ENCODE measurements at regions of chr15 and their contacts with region 1.

Region 1: DNA sequence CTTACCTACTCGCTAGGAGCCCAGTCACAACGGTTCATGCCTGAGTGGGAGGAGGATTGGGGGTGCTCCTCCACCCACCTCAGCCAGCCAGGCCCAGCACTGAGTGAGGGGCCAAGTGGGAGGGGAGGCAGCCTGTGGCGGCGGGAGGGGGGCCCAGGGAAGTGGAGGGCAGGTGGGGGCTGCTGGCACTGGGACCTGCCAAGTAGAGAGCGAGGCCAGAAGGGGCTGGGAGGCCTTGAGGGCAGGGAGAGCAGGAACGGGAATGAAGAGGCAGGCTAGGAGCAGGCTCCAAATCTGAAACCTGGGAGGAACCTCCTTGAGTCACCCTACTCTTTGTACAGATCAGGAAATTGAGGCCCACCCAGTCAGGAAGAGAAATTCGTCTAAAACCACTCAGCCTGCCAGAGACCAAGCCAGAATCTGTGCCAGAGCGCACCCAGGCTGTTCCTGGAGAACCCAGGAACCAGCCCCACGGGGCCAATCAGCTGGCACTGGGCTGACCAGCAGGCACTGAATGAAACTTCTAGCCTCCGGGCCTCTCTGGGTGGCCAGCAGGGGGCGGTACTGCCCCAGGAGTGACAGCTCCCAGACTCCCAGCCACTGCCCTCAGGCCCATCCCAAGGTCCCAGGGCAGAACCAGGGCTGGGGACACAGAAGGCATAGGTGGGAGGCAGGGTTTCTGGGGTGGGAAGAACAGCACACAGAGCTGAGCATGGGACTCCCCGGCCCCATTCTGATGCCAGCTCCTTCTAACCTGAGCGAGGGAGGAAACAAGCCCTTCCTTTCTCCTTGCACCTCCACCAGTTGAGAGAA is 14.8 kb upstream of the CYP11A1 start:
- DNase-seq: peak; percentile 77
- H3K4me3 ChIP-seq: no peak overlapping the region
- H3K27ac ChIP-seq: no peak overlapping the region
- H3K4me1 ChIP-seq: peaks cover 52% of the 10 kb centered on the region
- CTCF ChIP-seq: peak; percentile 99

Region 2: DNA sequence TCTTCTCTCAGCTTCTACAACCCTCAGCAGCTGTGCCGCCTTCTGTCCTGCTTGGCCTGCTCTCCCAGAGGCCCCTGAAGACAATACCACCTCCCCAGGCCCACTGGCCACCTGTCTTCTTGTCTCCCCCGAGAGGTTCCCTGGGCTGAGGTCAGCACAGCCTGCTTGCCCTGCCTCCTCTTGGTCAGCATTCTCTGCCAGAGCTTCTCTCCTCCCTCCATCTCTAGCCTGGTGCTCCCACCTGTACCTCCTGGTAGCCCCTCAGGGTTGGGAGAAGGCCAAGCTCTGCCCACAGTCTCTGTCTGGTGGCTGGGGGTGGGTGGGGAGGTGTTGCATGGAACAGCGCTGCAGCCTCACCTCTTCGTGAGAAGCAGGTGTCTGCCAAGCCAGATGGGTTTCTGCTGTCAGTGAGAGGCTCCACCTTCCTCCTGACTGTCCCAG is 214.3 kb before region 1 on chr15:
- CTCF ChIA-PET with region 1: no interaction called
- POLR2A ChIA-PET with region 1: no interaction called
- intact Hi-C with region 1: no loop called
- DNase-seq: no peak
- H3K4me3 ChIP-seq: no peak overlapping the region
- H3K27ac ChIP-seq: no peak overlapping the region
- H3K4me1 ChIP-seq: no peaks in the 10 kb centered on the region
- CTCF ChIP-seq: no peak

Region 3: DNA sequence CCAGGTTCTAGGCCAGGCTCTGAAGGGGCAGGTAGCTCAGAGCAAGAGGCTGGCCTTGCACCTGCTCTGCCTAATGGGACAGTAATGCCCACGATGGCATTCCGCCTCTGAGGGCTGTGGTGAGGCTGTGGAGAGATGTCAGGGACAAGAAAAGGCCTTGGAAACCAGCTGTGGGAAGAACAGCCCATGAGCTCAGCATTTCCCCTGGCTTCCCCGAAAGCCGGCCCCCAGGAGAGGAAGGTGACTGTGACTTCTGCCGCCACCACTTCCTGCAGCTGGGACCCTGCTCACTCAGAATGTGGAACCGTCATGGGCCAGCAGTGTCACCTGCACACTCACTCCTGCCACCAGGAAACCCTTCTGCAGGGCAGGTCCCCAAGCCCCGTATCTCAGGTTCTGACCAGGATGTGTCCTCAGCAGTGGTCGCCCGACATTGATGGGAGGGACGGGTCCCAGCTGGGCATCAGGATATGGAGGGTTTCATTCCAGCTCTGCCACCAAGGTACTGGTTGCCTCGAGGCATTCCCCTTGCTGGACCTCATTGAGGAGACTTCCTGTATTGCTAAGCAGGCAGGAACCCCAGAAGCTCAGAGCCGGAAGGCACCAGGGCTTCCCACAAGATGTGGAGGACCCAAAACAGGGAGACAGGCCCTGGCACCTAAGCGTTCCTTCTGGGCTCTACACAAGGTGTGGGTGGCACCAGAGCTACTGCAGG is 20.8 kb after region 1 on chr15:
- CTCF ChIA-PET with region 1: interaction called, 6 read pairs
- POLR2A ChIA-PET with region 1: interaction called, 5 read pairs
- intact Hi-C with region 1: loop called (anchors 1 kb)
- DNase-seq: peak; percentile 89
- H3K4me3 ChIP-seq: peak overlapping the region; percentile 51
- H3K27ac ChIP-seq: peak overlapping the region; percentile 53
- H3K4me1 ChIP-seq: peaks cover 66% of the 10 kb centered on the region
- CTCF ChIP-seq: no peak

Region 4: DNA sequence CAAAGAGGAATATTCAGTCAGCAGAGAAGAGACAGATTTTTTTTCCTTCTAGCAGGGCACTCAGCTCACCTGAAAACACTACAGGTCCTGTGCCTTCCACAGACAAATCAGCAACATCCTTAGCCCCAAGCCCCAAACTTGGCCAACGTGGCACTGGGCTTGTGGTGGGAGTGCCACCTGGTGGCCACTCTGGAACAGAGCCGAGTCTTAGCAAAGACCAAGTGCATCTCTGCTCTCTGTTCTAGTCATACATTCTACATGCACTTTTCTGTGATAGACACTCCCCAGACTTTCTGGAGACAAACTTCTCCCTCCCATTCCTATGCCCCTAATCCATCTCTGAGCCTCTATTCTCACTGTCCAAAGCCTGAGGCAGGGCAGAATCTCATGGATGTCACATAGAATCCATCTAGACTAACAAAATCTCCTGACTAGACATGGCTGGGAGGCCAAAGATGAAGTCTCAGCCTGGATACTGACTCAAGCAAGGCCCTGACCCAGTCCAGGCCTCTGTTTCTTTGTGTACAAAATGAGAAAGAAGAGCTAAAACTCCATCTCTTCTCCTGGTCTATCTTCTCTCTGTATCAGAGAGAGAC is 56.6 kb after region 1 on chr15:
- CTCF ChIA-PET with region 1: interaction called, 3 read pairs
- POLR2A ChIA-PET with region 1: interaction called, 7 read pairs
- intact Hi-C with region 1: loop called (anchors 1 kb)
- DNase-seq: peak; percentile 84
- H3K4me3 ChIP-seq: no peak overlapping the region
- H3K27ac ChIP-seq: no peak overlapping the region
- H3K4me1 ChIP-seq: peaks cover 10% of the 10 kb centered on the region
- CTCF ChIP-seq: peak; percentile 98

Region 5: DNA sequence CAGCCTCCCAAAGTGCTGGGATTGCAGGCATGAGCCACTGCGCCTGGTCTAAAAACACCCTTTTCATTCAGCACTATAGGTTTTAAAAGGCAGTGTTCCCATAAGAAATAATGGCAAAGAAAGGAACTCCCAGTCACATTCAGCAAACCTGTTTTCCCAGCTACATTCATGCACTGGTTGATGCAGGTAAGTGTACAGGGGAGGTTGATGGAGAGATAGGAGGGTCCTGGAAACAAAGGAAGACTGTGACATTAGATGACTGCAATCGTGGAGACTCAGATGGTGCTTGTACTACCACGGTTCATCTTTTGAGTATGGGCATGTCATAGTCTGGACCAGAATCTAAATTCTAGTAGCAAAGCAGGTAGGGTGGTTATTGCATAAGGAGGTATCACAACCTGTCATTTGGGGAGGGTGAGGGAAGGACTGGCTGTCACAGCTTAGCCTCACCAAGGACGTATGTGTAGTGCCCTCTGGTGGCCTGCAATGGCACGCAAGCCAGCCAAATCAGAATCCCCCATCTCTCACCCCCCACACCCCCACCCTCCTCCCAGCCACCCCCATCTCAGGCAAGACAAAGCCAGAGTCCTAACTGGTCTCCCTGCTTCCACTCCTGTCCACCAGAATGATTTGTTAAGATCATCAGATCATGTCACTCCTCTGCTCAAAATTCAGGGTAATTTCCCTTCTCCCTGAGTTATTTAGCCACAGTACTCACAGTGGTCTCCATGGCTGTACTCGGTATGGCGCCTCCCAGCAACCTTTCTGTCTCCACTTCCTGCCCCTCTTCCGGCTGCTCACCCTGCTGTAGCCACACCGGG is 107.5 kb after region 1 on chr15:
- CTCF ChIA-PET with region 1: no interaction called
- POLR2A ChIA-PET with region 1: no interaction called
- intact Hi-C with region 1: loop called (anchors 1 kb)
- DNase-seq: peak; percentile 82
- H3K4me3 ChIP-seq: peak overlapping the region; percentile 50
- H3K27ac ChIP-seq: peak overlapping the region; percentile 35
- H3K4me1 ChIP-seq: peaks cover 6% of the 10 kb centered on the region
- CTCF ChIP-seq: peak; percentile 82

Region 6: DNA sequence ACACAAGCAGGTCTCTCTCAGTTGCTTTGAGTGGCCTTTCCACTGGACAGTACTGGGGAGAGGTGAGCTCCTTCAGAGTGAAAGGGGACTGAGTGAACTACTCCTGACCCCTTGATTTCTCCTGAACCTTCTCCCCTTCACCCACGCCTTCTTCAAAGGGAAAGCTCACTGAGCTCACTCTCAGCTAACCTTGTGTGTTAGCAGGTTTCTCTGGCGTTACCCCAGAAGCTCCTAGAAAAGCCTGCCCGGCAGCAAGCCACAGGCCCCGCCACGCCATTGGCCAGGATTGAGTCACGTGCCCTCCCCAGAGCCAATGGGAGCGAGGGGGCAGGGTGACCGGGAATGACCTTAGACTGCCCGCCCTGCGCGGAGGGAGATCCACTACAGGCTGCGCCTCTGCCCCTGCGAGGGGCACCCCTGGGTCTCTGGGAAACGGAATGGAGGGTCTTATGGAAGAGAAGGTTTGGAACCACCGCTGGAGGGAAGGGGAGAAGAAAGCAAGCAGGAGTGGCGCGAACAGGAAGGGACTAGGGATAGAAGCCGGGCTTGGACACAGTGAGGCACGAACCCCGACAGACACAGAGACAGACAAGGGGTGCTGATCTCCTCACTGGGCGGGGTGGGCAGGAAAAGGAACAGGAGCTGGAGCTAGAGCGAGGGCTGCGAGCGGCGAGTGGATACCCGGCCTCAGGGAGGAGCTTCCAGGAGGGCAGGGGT is 216.1 kb after region 1 on chr15:
- CTCF ChIA-PET with region 1: no interaction called
- POLR2A ChIA-PET with region 1: no interaction called
- intact Hi-C with region 1: no loop called
- DNase-seq: peak; percentile 89
- H3K4me3 ChIP-seq: peak overlapping the region; percentile 66
- H3K27ac ChIP-seq: peak overlapping the region; percentile 32
- H3K4me1 ChIP-seq: peaks cover 12% of the 10 kb centered on the region
- CTCF ChIP-seq: no peak